ENCODE measurements at regions of chr3 and their contacts with region 1.

Region 1: DNA sequence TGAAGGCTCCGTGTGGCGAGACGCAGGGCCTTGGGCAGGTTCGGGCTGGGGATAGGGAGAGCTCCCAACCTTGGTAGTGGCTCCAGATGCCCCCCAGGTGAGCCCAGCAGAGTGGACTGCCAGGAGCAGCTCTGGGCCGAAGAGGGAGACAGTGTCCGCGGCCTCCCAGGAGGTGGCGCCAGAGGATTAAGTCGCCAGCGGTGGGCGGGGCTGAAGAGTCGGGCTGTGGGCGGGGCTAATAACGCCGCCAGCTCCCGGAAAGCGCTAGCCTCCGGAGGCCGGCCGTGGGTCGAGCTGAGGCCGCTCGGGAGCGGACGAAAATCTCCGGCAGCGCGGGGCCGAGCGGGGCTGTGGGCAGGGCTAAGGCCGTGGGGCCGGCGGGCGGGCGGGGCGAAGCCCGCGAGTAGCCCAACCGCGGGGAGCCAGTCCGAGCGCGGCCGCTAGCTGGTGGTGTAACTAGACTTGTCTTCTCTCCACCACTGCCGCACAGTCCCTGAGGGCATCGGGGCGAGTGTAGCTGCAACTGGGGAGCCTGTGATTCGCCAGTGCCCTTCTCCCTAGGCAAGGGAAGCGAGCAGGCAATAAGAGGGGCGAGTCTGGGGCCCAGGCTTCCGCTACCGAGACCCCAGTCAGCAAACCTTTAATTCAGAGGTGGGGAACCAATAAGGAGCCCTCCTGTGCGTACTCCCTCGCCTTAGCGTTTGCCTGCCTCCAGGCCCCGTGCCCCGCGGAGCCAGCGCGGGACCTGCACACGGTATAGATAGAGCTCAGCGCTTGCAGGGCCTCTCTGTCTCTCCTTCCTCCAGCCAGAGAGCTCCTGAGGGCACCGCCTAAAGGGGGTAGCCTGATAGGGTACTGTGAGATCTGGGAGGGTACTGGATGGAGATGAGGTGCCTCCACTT is 14.4 kb upstream of the BSN start:
- DNase-seq: peak; percentile 93 to 98 (median 95)
- ATAC-seq: peak; percentile 92 to 98 (median 98)
- H3K4me3 ChIP-seq: peak overlapping the region; percentile 12 to 89 (median 57)
- H3K27ac ChIP-seq: peak overlapping the region; percentile 12 to 88 (median 76)
- H3K4me1 ChIP-seq: peaks cover 0 to 25% (median 7%) of the 10 kb centered on the region in 12 donors
- H3K27me3 ChIP-seq: no peaks in the 10 kb centered on the region
- CTCF ChIP-seq: peak; percentile 87 to 99 (median 91)
- POLR2A ChIP-seq: peak in 1 of 2 donors; percentile 65

Region 2: GRCh38 chr3:49500732-49501609 is 38.9 kb before region 1 on chr3:
- intact Hi-C with region 1: no loop called
- DNase-seq: peak in 4 of 5 donors; percentile 62 to 84 (median 70)
- ATAC-seq: peak; percentile 90 to 96 (median 94)
- H3K4me3 ChIP-seq: no peak overlapping the region
- H3K27ac ChIP-seq: peak overlapping the region; percentile 60 to 89 (median 79)
- H3K4me1 ChIP-seq: peaks cover 0 to 45% (median 24%) of the 10 kb centered on the region in 12 donors
- H3K27me3 ChIP-seq: no peaks in the 10 kb centered on the region
- CTCF ChIP-seq: no peak
- POLR2A ChIP-seq: no peak

Region 3: GRCh38 chr3:49673715-49674496 is 134.0 kb after region 1 on chr3 and contains the start of gene APEH:
- intact Hi-C with region 1: loop called (anchors 1 to 2 kb)
- DNase-seq: peak; percentile 95 to 99 (median 97)
- ATAC-seq: peak; percentile 91 to 95 (median 94)
- H3K4me3 ChIP-seq: peak within 1 kb of the TSS; percentile 66 to 100 (median 80)
- H3K27ac ChIP-seq: peak within 1 kb of the TSS; percentile 63 to 99 (median 90)
- H3K4me1 ChIP-seq: peaks cover 0 to 28% (median 14%) of the 10 kb centered on the region in 12 donors
- H3K27me3 ChIP-seq: no peaks in the 10 kb centered on the region
- CTCF ChIP-seq: peak in 2 of 12 donors; percentile 17 to 19
- POLR2A ChIP-seq: peak in 1 of 2 donors; percentile 78
- total RNA-seq, gene APEH: 74.6 to 136 (median 105) TPM

Measured in heart left ventricle (tissue), 16 donors.